HEK293 (cell line): ENCODE measurements at regions of chr2 and their contacts with region 1.

Region 1: DNA sequence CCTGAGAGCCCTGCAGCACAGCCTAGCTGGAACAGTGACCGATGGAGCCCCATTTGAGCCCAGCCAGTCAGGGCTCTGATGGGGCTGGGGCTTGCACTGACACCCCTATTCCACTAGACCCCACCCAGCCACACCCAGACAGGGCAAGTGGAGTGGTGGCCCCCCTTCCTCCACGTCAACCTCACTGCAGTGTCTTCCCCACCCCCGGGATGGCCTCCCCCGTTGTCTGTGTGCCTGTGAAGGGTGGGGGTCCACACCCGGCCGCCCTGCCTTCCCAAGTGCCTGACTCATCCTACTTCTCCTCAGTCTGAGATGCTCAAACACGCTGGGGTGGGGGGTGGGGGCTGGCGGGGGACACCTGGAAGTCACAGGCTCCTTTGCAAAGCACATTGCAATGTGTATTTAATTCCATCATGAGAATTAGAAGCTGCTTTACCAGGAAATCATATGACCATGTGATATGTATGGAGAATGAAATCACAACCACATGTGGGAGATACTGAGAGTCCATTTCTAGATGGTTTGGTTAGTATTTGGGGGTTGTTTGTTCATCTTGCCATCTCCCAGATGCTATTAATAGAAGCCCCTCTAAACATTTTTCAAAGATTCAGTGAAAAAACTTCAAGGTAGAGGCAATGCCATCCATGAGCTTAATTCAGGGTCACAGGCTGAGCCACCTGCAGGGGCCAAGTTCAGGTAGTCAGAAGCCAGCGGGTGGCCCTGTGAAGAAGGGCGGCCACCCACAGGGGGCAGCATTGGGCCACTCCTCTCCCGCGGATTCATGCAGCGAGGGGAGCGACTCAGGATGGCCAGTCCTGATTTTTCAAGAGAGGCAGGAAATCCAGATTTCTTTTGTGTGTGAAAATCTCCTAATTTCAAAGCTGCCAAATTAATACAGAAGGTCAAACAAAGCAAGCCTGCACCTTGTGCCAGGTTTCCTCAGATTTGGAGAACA is 22.7 kb upstream of the GMPPA start:
- H3K4me3 ChIP-seq: no peak overlapping the region
- H3K27ac ChIP-seq: no peak overlapping the region
- H3K4me1 ChIP-seq: 0 out of 2 replicates have a peak, but pooled peaks cover 2% of the 10 kb centered on the region
- CTCF ChIP-seq: peak; percentile 83

Region 2: DNA sequence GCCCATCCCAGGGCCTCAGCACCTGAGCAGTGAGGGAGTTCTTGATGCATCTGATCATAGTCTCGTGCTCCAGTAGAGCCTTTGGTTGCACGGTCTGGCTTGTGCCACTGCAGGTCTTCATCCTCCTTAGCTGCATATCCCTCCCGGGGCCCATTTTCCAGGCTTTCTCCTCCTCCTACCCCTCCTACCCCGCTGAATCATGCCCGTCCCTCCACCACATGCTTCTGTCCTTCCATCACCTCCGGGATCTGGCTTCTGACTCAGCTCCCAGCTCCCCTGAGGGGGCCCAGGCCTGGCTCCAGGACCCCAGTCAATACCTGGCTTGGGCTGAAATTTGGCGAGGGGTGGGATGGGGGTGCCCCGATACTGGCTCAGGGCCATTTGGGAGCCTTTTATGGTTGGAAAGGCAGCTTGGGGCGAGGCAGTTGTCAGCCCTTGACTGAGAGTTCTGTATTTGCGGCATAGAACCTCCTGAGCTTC is 23.1 kb before region 1 on chr2:
- CTCF ChIA-PET with region 1: interaction called, 11 read pairs
- POLR2A ChIA-PET with region 1: no interaction called
- H3K4me3 ChIP-seq: no peak overlapping the region
- H3K27ac ChIP-seq: no peak overlapping the region
- H3K4me1 ChIP-seq: no peaks in the 10 kb centered on the region; the same call in 1 of the 2 replicates
- CTCF ChIP-seq: no peak

Region 3: DNA sequence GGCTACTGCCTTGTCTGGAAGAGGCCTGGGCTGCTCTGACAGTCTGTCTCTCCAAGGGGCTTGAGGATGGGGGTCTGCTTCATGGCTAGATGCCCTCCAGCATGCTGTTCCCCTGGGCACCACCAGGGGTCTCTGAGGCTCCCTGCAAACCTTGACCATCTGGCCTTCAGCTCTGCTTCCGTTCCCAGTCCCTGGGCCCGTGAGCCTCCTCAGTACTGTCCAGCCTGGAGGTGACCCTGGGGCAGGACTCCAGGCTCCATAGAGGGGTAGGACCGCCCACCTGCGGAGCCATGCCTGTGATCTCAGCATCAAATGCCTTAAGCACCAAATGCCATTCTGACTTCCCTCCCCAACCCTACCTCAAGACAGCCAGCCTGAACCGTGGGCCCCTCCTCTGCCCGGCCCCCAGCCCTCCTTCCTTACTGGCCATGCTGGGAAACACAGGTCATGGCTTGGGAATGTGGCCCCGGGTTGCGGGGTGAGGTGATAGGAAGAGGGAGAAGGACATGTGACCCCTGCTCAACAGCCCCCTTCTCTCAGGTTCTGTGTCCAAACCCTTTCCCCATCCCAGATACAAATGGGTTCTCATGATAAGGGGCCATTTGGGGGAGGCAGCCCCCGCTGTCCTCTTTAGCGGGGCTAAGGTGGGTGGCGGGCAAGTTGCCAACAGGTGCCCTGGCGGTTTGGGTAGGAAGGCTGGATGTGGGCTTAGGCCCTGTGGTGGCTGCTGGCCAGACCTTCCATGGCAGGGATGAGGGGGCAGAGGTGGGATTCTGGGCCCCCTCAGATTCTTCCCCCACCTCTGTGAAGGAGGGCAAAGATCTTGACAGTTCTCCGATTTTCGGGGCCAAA is 16.3 kb before region 1 on chr2:
- CTCF ChIA-PET with region 1: interaction called, 19 read pairs
- POLR2A ChIA-PET with region 1: no interaction called
- H3K4me3 ChIP-seq: no peak overlapping the region
- H3K27ac ChIP-seq: no peak overlapping the region
- H3K4me1 ChIP-seq: peaks cover 2% of the 10 kb centered on the region; the same call in 1 of the 2 replicates
- CTCF ChIP-seq: peak; percentile 77

Region 4: GRCh38 chr2:219509780-219510511 is 34.0 kb after region 1 on chr2:
- CTCF ChIA-PET with region 1: interaction called, 21 read pairs
- POLR2A ChIA-PET with region 1: no interaction called
- H3K4me3 ChIP-seq: peak overlapping the region; percentile 25
- H3K27ac ChIP-seq: no peak overlapping the region
- H3K4me1 ChIP-seq: peaks cover 2% of the 10 kb centered on the region
- CTCF ChIP-seq: peak; percentile 87

Region 5: DNA sequence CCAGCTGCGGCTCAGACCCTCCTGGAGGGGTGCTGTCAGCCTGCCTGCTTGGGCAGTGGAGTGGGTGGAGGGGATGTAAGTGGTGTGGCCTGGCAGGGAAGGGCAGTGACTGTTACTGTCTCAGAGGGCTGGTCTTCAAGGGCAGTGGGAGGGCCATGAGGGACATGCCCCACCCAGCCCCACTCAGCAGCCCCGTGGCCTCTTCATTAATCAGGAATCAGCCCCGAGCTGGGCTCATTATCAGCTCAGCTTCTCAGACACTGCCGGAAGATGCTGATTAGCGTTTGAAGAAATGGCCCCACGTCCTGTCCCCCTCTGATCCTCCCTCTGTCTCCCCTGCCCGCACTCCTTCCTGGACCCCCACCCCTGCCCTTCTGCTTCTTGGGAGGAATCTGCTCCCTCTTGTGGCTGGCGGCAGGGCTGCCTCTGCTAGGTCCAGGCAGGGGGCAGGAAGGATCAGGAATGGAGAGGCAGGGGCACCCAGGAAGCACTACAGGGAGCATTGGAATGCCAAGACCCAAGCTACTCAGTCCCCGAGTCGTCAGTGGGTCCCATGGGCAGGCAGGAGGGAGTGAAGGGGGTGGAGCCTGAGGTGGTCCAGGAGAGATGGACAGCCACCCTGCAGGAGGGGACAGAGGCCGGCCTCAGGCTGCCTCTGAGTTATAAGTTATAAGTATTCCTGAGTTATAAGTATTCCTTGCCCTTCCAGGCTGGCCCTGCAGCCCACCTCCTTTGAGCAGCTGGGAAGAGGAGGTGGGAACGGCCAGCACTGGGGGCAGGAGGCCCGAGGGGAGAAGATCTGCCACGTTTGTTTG is 45.3 kb after region 1 on chr2:
- CTCF ChIA-PET with region 1: interaction called, 156 read pairs
- POLR2A ChIA-PET with region 1: no interaction called
- H3K4me3 ChIP-seq: no peak overlapping the region
- H3K27ac ChIP-seq: no peak overlapping the region
- H3K4me1 ChIP-seq: peaks cover 7% of the 10 kb centered on the region
- CTCF ChIP-seq: peak; percentile 85